B cell (primary cell): ENCODE measurements at regions of chr4 and their contacts with region 1.

Region 1: DNA sequence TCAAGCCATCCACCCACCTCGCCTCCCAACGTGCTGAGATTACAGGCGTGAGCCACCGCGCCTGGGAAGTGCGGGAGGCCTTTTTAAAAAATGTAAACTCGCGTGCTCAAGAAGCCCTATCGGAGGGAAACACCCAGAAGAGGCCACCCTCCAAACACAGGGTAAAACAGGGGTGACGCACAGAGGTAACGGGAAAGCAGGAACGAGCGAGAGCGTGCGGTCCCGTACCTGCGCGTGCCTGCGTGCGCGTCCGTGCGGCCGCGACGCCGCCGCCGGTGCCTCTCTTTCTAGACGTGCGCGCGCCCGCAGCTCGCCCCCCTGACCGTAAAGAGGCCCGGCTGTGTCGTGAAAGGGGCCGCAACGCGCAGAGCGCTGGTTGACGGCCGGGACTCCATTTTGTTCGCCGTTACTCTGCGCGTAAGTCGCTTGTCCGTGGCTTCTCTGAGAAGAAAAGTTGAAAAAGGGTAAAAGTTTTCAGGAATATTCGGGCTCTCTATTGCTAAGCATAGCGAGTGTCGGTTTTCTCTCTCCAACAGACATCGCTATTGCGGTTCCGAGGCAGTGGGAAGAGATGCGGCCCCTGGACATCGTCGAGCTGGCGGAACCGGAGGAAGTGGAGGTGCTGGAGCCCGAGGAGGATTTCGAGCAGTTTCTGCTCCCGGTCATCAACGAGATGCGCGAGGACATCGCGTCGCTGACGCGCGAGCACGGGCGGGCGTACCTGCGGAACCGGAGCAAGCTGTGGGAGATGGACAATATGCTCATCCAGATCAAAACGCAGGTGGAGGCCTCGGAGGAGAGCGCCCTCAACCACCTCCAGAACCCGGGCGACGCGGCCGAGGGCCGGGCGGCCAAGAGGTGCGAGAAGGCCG is at the start of gene MRFAP1:
- DNase-seq: peak; percentile 97
- ATAC-seq: peak; percentile 87
- H3K4me3 ChIP-seq: peak within 1 kb of the TSS; percentile 83 to 99 (median 96)
- H3K4me3 Mint-ChIP-seq: peak within 1 kb of the TSS; percentile 99
- H3K27ac ChIP-seq: peak within 1 kb of the TSS; percentile 95 to 96
- H3K27ac Mint-ChIP-seq: peak within 1 kb of the TSS; percentile 98
- H3K4me1 ChIP-seq: peaks cover 17 to 25% of the 10 kb centered on the region in 2 donors
- H3K4me1 Mint-ChIP-seq: peaks cover 33% of the 10 kb centered on the region
- H3K27me3 ChIP-seq: no peaks in the 10 kb centered on the region
- H3K27me3 Mint-ChIP-seq: no peaks in the 10 kb centered on the region
- CTCF ChIP-seq: no peak
- total RNA-seq, gene MRFAP1: 100 and 113 TPM in 2 replicates

Region 2: DNA sequence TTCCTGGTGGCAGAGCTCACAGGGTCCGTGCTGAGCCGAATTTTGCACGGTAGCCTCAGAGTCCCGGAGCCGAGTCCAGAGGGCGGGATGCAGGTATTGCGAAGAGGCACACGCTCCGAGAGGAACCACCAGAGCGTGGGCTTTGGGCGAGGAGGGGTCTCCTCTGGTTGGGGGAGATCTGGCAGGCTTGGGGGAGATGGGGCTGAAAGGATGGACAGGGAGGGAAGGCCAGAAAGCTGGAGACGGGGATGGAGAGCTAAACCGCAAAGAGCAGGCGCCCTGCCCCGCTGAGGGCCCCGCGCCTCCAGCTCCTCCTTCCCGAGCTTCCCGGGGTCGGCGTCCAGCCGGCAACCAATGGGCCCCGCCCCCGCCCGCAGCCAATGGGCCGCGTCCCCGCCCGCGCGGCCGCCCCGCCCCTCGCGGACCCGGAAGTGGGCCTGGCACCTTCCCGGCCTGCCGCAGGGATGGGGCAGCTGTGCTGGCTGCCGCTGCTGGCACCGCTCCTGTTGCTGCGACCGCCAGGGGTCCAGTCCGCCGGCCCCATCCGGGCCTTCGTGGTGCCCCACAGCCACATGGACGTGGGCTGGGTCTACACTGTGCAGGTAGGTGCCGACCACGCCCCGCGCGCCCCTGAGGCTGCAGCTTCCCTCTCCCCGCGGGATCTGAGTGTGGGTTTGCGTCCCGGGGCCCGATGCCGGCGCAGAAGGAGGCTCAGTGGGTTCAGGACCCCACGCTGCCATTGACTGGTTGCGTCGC is 65.6 kb before region 1 on chr4 and contains the start of gene MAN2B2:
- CTCF ChIA-PET with region 1: interaction called, 3 read pairs
- POLR2A ChIA-PET with region 1: no interaction called
- intact Hi-C with region 1: loop called (anchors 1 kb)
- DNase-seq: peak; percentile 82
- ATAC-seq: peak; percentile 96
- H3K4me3 ChIP-seq: peak within 1 kb of the TSS; percentile 67 to 92 (median 82)
- H3K4me3 Mint-ChIP-seq: peak within 1 kb of the TSS; percentile 90
- H3K27ac ChIP-seq: peak within 1 kb of the TSS; percentile 64 to 83
- H3K27ac Mint-ChIP-seq: peak within 1 kb of the TSS; percentile 89
- H3K4me1 ChIP-seq: peaks cover 9 to 19% of the 10 kb centered on the region in 2 donors
- H3K4me1 Mint-ChIP-seq: peaks cover 16% of the 10 kb centered on the region
- H3K27me3 ChIP-seq: peaks cover 0 to 2% (median 0%) of the 10 kb centered on the region in 4 experiments
- H3K27me3 Mint-ChIP-seq: no peaks in the 10 kb centered on the region
- CTCF ChIP-seq: no peak
- total RNA-seq, gene MAN2B2: 37.0 TPM in 2 replicates

Region 3: GRCh38 chr4:6673660-6674499 is 33.4 kb after region 1 on chr4:
- CTCF ChIA-PET with region 1: interaction called, 4 read pairs
- POLR2A ChIA-PET with region 1: interaction called, 23 read pairs
- intact Hi-C with region 1: loop called (anchors 1 kb)
- DNase-seq: peak; percentile 97
- ATAC-seq: peak; percentile 89
- H3K4me3 ChIP-seq: peak overlapping the region; percentile 22 to 82 (median 63)
- H3K4me3 Mint-ChIP-seq: peak overlapping the region; percentile 91
- H3K27ac ChIP-seq: peak overlapping the region; percentile 67 to 71
- H3K27ac Mint-ChIP-seq: peak overlapping the region; percentile 99
- H3K4me1 ChIP-seq: peaks cover 27 to 35% of the 10 kb centered on the region in 2 donors
- H3K4me1 Mint-ChIP-seq: peaks cover 43% of the 10 kb centered on the region
- H3K27me3 ChIP-seq: no peaks in the 10 kb centered on the region
- H3K27me3 Mint-ChIP-seq: no peaks in the 10 kb centered on the region
- CTCF ChIP-seq: no peak

Region 4: DNA sequence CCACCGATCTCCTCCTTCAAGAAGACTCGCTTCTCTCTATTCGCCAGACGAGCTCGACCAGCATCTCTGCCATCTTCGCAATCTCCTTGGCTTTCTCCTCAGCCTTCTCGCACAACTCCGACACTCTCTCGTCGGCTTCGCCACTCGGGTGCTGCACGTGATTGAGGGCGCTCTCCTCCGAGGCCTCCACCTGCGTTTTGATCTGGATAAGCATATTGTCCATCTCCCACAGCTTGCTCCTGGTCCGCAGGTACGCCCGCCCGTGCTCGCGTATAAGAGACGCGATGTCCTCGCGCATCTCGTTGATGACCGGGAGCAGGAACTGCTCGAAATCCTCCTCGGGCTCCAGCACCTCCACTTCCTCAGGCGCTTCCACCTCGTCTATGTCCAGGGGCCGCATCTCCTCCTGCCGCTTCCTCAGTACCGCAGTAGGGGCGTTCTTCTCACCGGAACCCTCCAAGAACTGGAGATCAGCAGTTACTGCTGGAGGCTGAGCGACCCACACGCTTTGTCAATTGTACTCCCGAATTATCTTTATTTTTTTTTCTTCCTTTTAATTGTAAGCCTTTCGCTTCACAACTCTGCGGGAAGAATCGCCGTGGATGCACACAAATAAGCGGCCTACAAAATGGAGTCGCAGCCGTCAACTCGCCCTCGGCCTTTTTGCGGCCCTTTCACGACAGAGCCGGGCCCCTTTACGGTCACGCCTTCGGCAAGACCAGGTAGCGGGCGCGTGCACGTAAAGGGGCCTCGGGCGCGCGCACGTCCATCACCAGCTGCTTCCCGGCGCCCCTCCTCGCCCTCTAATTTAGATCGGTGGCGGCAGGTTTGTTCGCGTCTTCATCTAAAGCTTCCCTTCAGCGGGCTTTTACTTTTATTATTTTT is 68.9 kb after region 1 on chr4 and contains the start of gene MRFAP1L1:
- CTCF ChIA-PET with region 1: interaction called, 5 read pairs
- POLR2A ChIA-PET with region 1: interaction called, 15 read pairs
- intact Hi-C with region 1: loop called (anchors 1 kb)
- DNase-seq: peak; percentile 97
- ATAC-seq: peak; percentile 83
- H3K4me3 ChIP-seq: peak within 1 kb of the TSS; percentile 72 to 90 (median 77)
- H3K4me3 Mint-ChIP-seq: peak within 1 kb of the TSS; percentile 99
- H3K27ac ChIP-seq: peak within 1 kb of the TSS; percentile 80 to 83
- H3K27ac Mint-ChIP-seq: peak within 1 kb of the TSS; percentile 98
- H3K4me1 ChIP-seq: peaks cover 32 to 36% of the 10 kb centered on the region in 2 donors
- H3K4me1 Mint-ChIP-seq: peaks cover 57% of the 10 kb centered on the region
- H3K27me3 ChIP-seq: no peaks in the 10 kb centered on the region
- H3K27me3 Mint-ChIP-seq: no peaks in the 10 kb centered on the region
- CTCF ChIP-seq: no peak
- total RNA-seq, gene MRFAP1L1: 53.8 and 57.2 TPM in 2 replicates

Region 5: GRCh38 chr4:6909073-6909965 is 268.8 kb after region 1 on chr4 and contains the start of gene TBC1D14:
- CTCF ChIA-PET with region 1: no interaction called
- POLR2A ChIA-PET with region 1: interaction called, 8 read pairs
- intact Hi-C with region 1: loop called (anchors 1 kb)
- DNase-seq: peak; percentile 94
- ATAC-seq: peak; percentile 89
- H3K4me3 ChIP-seq: peak within 1 kb of the TSS; percentile 72 to 85 (median 78)
- H3K4me3 Mint-ChIP-seq: peak within 1 kb of the TSS; percentile 95
- H3K27ac ChIP-seq: peak within 1 kb of the TSS; percentile 93 to 97
- H3K27ac Mint-ChIP-seq: peak within 1 kb of the TSS; percentile 94
- H3K4me1 ChIP-seq: peaks cover 33 to 43% of the 10 kb centered on the region in 2 donors
- H3K4me1 Mint-ChIP-seq: peaks cover 38% of the 10 kb centered on the region
- H3K27me3 ChIP-seq: peaks cover 0 to 3% (median 0%) of the 10 kb centered on the region in 4 experiments
- H3K27me3 Mint-ChIP-seq: peaks cover 8% of the 10 kb centered on the region
- CTCF ChIP-seq: no peak
- total RNA-seq, gene TBC1D14: 42.0 and 44.1 TPM in 2 replicates